ENCODE measurements at regions of chr14 and their contacts with region 1.

Region 1: DNA sequence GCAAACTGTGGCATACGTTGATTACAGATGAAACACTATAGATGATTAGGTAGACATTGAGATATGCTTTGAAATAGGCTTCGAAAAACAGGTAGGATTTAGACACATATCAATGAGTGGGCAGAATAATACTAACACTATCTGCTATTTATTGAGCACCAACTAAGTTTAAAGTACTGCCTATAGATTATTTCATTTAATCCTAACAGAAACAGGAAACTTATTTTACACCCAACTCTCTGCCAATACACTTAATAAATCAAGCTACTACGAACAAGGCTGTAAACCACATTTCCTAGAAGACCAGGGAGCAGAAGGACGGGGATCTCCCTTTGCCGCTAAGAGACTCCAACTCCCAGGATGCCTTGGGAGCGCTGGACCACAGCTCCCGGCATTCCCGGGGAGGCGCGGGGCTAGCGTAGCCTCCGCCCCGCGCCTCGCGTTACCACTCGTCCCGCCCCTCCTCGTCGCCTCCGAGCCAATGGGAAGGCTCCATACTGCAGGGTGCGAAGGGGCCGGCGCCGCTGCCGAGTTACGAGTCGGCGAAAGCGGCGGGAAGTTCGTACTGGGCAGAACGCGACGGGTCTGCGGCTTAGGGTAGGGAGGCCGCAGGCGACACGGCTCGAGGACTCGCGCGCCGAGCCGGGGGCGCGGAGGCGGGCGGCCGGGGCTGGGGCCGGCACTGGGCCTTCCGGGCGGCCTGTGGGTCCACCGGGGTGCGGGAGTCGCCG is at the start of gene VRK1:
- DNase-seq: peak; percentile 87 to 93 (median 90)
- ATAC-seq: peak; percentile 99
- H3K4me3 ChIP-seq: peak within 1 kb of the TSS; percentile 75
- H3K4me3 Mint-ChIP-seq: peak within 1 kb of the TSS; percentile 86 to 93 (median 91)
- H3K27ac ChIP-seq: peak within 1 kb of the TSS; percentile 79
- H3K27ac Mint-ChIP-seq: peak within 1 kb of the TSS; percentile 75 to 95 (median 90)
- H3K4me1 ChIP-seq: peaks cover 10 to 14% of the 10 kb centered on the region in 2 donors
- H3K4me1 Mint-ChIP-seq: peaks cover 10 to 33% (median 25%) of the 10 kb centered on the region in 7 donors
- H3K27me3 ChIP-seq: no peaks in the 10 kb centered on the region
- H3K27me3 Mint-ChIP-seq: peaks cover 0 to 10% (median 3%) of the 10 kb centered on the region in 5 donors
- total RNA-seq, gene VRK1: 28.5 to 52.2 (median 40.7) TPM

Region 2: DNA sequence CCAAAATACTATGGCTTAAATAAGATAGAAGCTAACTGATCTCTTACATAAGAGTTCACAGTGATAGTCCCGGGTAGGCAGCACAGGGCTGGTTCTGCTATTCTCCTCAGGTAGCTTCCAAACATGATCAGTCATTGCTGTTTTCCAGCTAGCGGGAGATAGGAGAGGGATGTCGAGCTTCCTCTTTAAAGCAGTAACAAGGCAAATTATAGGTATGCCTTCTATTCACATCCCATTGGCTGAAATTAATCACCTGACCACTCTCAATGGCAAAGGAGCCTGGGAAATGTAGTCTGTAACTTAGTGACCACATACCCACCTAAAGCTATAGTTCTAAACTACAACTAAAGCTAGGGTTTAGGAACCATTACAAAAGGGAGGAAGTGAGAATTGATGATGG is 34.4 kb before region 1 on chr14:
- CTCF ChIA-PET with region 1: no interaction called
- POLR2A ChIA-PET with region 1: no interaction called
- intact Hi-C with region 1: loop called (anchors 1 kb)
- DNase-seq: peak in 7 of 9 donors; percentile 42 to 65 (median 52)
- ATAC-seq: peak; percentile 92
- H3K4me3 ChIP-seq: peak overlapping the region; percentile 19
- H3K4me3 Mint-ChIP-seq: peak overlapping the region in 9 of 10 donors; percentile 28 to 82 (median 64)
- H3K27ac ChIP-seq: no peak overlapping the region
- H3K27ac Mint-ChIP-seq: peak overlapping the region in 1 of 9 donors; percentile 73
- H3K4me1 ChIP-seq: no peaks in the 10 kb centered on the region
- H3K4me1 Mint-ChIP-seq: peaks cover 3 to 6% (median 5%) of the 10 kb centered on the region in 7 donors
- H3K27me3 ChIP-seq: no peaks in the 10 kb centered on the region
- H3K27me3 Mint-ChIP-seq: peaks cover 4 to 34% (median 9%) of the 10 kb centered on the region in 5 donors

Region 3: GRCh38 chr14:96783915-96784224 is 13.1 kb before region 1 on chr14:
- CTCF ChIA-PET with region 1: no interaction called
- POLR2A ChIA-PET with region 1: no interaction called
- intact Hi-C with region 1: no loop called
- DNase-seq: no peak
- ATAC-seq: no peak
- H3K4me3 ChIP-seq: no peak overlapping the region
- H3K4me3 Mint-ChIP-seq: no peak overlapping the region
- H3K27ac ChIP-seq: no peak overlapping the region
- H3K27ac Mint-ChIP-seq: no peak overlapping the region
- H3K4me1 ChIP-seq: no peaks in the 10 kb centered on the region
- H3K4me1 Mint-ChIP-seq: peaks cover 0 to 1% (median 0%) of the 10 kb centered on the region in 7 donors
- H3K27me3 ChIP-seq: no peaks in the 10 kb centered on the region
- H3K27me3 Mint-ChIP-seq: peaks cover 0 to 49% (median 13%) of the 10 kb centered on the region in 5 donors

Region 4: DNA sequence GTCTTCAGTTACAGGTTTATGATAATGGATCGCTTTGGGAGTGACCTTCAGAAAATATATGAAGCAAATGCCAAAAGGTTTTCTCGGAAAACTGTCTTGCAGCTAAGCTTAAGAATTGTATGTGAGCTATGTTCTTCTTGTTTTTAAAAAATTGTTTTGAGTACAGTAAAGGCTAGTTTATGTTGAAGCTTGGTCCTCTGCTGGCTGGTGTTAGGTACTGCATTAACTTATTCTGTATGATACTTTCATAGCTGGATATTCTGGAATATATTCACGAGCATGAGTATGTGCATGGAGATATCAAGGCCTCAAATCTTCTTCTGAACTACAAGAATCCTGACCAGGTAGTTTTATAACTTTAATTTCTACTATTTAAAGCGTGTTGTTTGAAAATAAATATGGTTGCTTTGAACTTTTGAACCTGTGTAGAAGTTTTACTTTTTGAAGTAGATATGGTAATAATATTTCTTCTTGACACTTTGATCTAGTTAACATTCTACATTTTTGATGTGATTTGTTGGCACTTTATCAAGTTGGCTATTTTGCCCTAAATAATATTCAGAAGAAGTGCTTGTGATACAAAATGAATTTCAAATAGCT is 55.9 kb after region 1 on chr14:
- CTCF ChIA-PET with region 1: no interaction called
- POLR2A ChIA-PET with region 1: no interaction called
- intact Hi-C with region 1: loop called in 1 of 2 experiments (anchors 2 kb)
- DNase-seq: peak in 5 of 9 donors; percentile 1 to 29 (median 7)
- ATAC-seq: peak; percentile 73
- H3K4me3 ChIP-seq: no peak overlapping the region
- H3K4me3 Mint-ChIP-seq: no peak overlapping the region
- H3K27ac ChIP-seq: no peak overlapping the region
- H3K27ac Mint-ChIP-seq: no peak overlapping the region
- H3K4me1 ChIP-seq: no peaks in the 10 kb centered on the region
- H3K4me1 Mint-ChIP-seq: peaks cover 3 to 24% (median 12%) of the 10 kb centered on the region in 7 donors
- H3K27me3 ChIP-seq: no peaks in the 10 kb centered on the region
- H3K27me3 Mint-ChIP-seq: no peaks in the 10 kb centered on the region

Region 5: DNA sequence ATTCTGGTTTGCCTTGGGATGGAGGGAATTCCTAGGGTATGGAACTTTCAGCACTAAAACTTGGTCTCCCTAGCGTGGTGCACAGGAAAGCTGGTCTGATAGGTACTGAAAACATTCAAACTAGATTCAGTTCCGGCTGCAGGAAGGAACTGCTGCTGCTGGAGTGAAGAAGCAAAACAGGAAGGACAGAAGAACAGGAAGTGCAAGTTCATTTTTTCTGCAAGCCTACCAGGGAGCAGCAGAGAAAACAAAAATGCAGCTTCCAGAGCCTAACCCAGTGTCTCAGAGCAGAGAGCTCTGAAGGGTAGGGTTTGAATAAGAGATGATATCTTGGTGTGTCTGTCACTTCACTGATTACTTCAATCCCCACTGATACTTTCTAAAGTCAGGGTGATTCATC is 165.3 kb after region 1 on chr14:
- CTCF ChIA-PET with region 1: no interaction called
- POLR2A ChIA-PET with region 1: no interaction called
- intact Hi-C with region 1: loop called in 1 of 2 experiments (anchors 1 kb)
- DNase-seq: peak in 7 of 9 donors; percentile 27 to 75 (median 59)
- ATAC-seq: peak; percentile 76
- H3K4me3 ChIP-seq: peak overlapping the region; percentile 14
- H3K4me3 Mint-ChIP-seq: peak overlapping the region; percentile 37 to 81 (median 76)
- H3K27ac ChIP-seq: peak overlapping the region; percentile 61
- H3K27ac Mint-ChIP-seq: peak overlapping the region; percentile 78 to 99 (median 94)
- H3K4me1 ChIP-seq: peaks cover 39 to 62% of the 10 kb centered on the region in 2 donors
- H3K4me1 Mint-ChIP-seq: peaks cover 17 to 76% (median 63%) of the 10 kb centered on the region in 7 donors
- H3K27me3 ChIP-seq: no peaks in the 10 kb centered on the region
- H3K27me3 Mint-ChIP-seq: no peaks in the 10 kb centered on the region

Region 6: DNA sequence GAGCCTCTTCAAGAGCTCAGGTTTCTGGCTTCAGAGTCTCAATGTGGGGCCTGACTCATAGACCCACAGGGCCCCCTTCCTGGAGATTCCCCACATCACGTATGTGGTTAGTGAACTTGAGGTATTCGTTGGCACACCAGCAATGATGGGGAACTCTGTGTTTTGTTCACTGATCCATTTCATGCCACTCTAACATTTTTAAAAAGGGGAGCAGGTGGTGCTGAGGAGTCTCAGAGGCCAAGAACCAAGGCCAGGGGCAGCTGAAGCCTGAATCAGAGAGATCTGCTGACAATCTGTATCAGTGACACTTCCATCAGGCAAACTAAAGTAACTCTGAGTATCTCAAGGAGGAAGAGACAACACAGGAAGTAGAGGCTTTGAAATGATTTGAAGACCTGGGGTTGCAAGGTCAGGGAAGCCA is 323.6 kb after region 1 on chr14:
- CTCF ChIA-PET with region 1: no interaction called
- POLR2A ChIA-PET with region 1: interaction called, 3 read pairs
- intact Hi-C with region 1: loop called in 1 of 2 experiments (anchors 2 kb)
- DNase-seq: peak; percentile 10 to 69 (median 48)
- ATAC-seq: peak; percentile 85
- H3K4me3 ChIP-seq: no peak overlapping the region
- H3K4me3 Mint-ChIP-seq: peak overlapping the region; percentile 56 to 81 (median 70)
- H3K27ac ChIP-seq: peak overlapping the region; percentile 57
- H3K27ac Mint-ChIP-seq: peak overlapping the region; percentile 75 to 96 (median 92)
- H3K4me1 ChIP-seq: peaks cover 22 to 33% of the 10 kb centered on the region in 2 donors
- H3K4me1 Mint-ChIP-seq: peaks cover 26 to 58% (median 37%) of the 10 kb centered on the region in 7 donors
- H3K27me3 ChIP-seq: no peaks in the 10 kb centered on the region
- H3K27me3 Mint-ChIP-seq: no peaks in the 10 kb centered on the region